ENCODE measurements at regions of chr5 and their contacts with region 1.

Region 1: GRCh38 chr5:37174928-37175327 is 74.2 kb downstream of the CPLANE1 start:
- DNase-seq: no peak
- H3K4me3 ChIP-seq: no peak overlapping the region
- H3K27ac ChIP-seq: no peak overlapping the region
- H3K4me1 ChIP-seq: no peaks in the 10 kb centered on the region
- H3K27me3 ChIP-seq: no peaks in the 10 kb centered on the region
- CTCF ChIP-seq: no peak

Region 2: DNA sequence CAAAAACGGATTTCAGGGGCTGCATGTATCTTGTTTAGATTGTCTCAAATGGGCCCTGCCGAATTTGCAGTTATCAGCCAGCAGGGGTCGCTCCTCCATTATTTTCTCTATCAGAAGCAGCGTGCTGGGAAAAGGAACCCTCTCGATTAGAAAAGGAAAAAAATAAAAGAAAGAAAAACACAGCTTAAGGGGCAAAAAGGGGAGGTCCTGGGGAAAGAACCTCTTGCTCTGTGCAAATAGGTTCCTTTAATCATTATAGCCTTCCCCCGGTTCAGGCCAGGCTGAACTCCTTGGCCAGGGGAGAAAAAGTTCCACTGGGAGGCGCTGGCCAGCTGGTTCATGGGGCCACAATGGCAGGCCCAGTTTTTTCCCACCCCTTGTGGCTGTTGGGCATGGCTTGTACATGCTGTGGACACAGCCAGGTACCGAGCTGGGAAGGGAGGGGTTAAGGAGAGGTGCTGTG is 1211.5 kb before region 1 on chr5:
- CTCF ChIA-PET with region 1: no interaction called
- POLR2A ChIA-PET with region 1: no interaction called
- intact Hi-C with region 1: no loop called
- DNase-seq: no peak
- H3K4me3 ChIP-seq: no peak overlapping the region
- H3K27ac ChIP-seq: no peak overlapping the region
- H3K4me1 ChIP-seq: no peaks in the 10 kb centered on the region
- H3K27me3 ChIP-seq: 0 out of 2 replicates have a peak, but pooled peaks cover 15% of the 10 kb centered on the region
- CTCF ChIP-seq: peak; percentile 71

Region 3: GRCh38 chr5:36459176-36460135 is 715.5 kb before region 1 on chr5:
- CTCF ChIA-PET with region 1: no interaction called
- POLR2A ChIA-PET with region 1: no interaction called
- intact Hi-C with region 1: loop called (anchors 5 kb)
- DNase-seq: peak in 1 of 2 experiments; percentile 99
- H3K4me3 ChIP-seq: peak overlapping the region; percentile 11; the same call in 1 of the 2 replicates
- H3K27ac ChIP-seq: peak overlapping the region; percentile 66
- H3K4me1 ChIP-seq: peaks cover 59% of the 10 kb centered on the region
- H3K27me3 ChIP-seq: no peaks in the 10 kb centered on the region
- CTCF ChIP-seq: peak; percentile 79

Region 4: DNA sequence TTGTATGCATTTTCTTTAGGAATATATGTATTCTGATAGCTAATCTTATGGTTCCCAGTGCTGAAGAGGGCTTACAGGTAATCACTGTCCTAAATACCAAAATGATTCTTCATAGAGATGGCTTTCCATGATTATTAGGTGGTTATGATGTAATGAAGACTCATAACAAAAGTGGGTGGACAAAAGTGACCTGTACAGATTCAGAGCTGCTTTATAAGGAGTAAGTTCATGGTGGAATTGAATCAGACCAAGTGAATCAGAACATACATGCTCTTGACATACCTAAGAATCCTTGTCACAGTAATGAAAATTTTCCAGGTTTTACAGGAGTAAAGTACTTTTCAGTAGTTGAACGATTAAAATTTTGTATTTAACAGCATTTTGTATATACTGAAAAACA is 192.8 kb before region 1 on chr5:
- CTCF ChIA-PET with region 1: no interaction called
- POLR2A ChIA-PET with region 1: interaction called, 10 read pairs
- intact Hi-C with region 1: no loop called
- DNase-seq: peak in 1 of 2 experiments; percentile 41
- H3K4me3 ChIP-seq: no peak overlapping the region
- H3K27ac ChIP-seq: no peak overlapping the region
- H3K4me1 ChIP-seq: no peaks in the 10 kb centered on the region
- H3K27me3 ChIP-seq: no peaks in the 10 kb centered on the region
- CTCF ChIP-seq: no peak

Region 5: GRCh38 chr5:37222176-37222575 is 47.2 kb after region 1 on chr5:
- CTCF ChIA-PET with region 1: no interaction called
- POLR2A ChIA-PET with region 1: no interaction called
- intact Hi-C with region 1: no loop called
- DNase-seq: no peak
- H3K4me3 ChIP-seq: no peak overlapping the region
- H3K27ac ChIP-seq: no peak overlapping the region
- H3K4me1 ChIP-seq: no peaks in the 10 kb centered on the region
- H3K27me3 ChIP-seq: no peaks in the 10 kb centered on the region
- CTCF ChIP-seq: no peak

Measured in PC-9 (cell line).